A549 (cell line): ENCODE measurements at regions of chr1 and their contacts with region 1.

Region 1: GRCh38 chr1:155392898-155393411 is 72.3 kb downstream of the RUSC1 start:
- DNase-seq: no peak
- ATAC-seq: no peak
- H3K4me3 ChIP-seq: no peak overlapping the region
- H3K27ac ChIP-seq: no peak overlapping the region
- H3K4me1 ChIP-seq: no peaks in the 10 kb centered on the region
- CTCF ChIP-seq: no peak
- EP300 ChIP-seq: no peak
- POLR2A ChIP-seq: no peak
- RAD21 ChIP-seq: no peak

Region 2: GRCh38 chr1:155308493-155309422 is 84.2 kb before region 1 on chr1 and contains the start of gene FDPS:
- CTCF ChIA-PET with region 1: no interaction called
- POLR2A ChIA-PET with region 1: no interaction called
- DNase-seq: peak; percentile 98 to 99
- ATAC-seq: peak; percentile 98
- H3K4me3 ChIP-seq: peak within 1 kb of the TSS; percentile 97
- H3K27ac ChIP-seq: peak within 1 kb of the TSS; percentile 93 to 95
- H3K4me1 ChIP-seq: peaks cover 27% of the 10 kb centered on the region
- CTCF ChIP-seq: no peak
- EP300 ChIP-seq: no peak
- POLR2A ChIP-seq: peak; percentile 74
- RAD21 ChIP-seq: no peak
- polyA plus RNA-seq, gene FDPS: 143 and 148 TPM in 2 replicates

Region 3: GRCh38 chr1:155360051-155360450 is 32.9 kb before region 1 on chr1:
- CTCF ChIA-PET with region 1: no interaction called
- POLR2A ChIA-PET with region 1: no interaction called
- DNase-seq: no peak
- ATAC-seq: no peak
- H3K4me3 ChIP-seq: no peak overlapping the region
- H3K27ac ChIP-seq: no peak overlapping the region
- H3K4me1 ChIP-seq: no peaks in the 10 kb centered on the region
- CTCF ChIP-seq: no peak
- EP300 ChIP-seq: no peak
- POLR2A ChIP-seq: no peak
- RAD21 ChIP-seq: no peak

Region 4: DNA sequence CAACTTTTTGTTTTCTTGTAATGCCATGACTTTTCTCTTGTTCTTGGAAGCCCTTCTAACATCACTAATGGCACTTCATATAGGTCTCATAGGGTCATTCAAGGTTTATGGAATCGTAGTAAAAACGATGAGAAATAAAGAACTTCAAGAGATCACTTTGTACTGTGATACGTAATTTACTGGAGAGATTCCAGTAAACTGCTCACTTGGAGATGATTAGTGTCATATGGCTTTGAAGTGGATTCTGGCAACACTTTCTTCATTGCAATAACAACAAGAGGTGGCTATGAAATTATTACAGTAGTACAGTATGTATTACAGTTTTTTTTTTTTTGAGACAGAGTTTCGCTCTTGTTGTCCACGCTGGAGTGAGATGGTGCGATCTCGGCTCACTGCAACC is 31.1 kb after region 1 on chr1:
- CTCF ChIA-PET with region 1: no interaction called
- POLR2A ChIA-PET with region 1: interaction called, 17 read pairs
- DNase-seq: no peak
- ATAC-seq: no peak
- H3K4me3 ChIP-seq: no peak overlapping the region
- H3K27ac ChIP-seq: no peak overlapping the region
- H3K4me1 ChIP-seq: peaks cover 21% of the 10 kb centered on the region
- CTCF ChIP-seq: no peak
- EP300 ChIP-seq: no peak
- POLR2A ChIP-seq: no peak
- RAD21 ChIP-seq: no peak

Region 5: DNA sequence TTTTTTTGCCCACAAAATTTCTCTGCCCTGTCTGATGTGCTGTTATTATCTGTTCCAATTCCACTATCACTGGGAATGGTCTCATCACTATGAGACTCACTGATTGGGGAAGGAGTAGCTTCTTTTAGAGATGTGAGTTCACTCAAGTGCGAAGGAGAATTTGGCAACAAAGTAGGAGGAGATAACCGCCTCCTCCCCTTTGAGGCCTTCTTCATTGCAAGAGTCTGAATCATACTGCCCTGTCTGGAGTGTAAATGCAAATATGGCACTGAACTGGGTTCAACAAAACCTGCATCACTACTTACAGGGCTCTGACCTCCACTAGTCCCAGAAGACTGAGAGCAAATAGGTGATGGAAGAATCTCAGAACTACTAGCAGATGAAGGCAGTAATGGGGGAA is 86.2 kb after region 1 on chr1:
- CTCF ChIA-PET with region 1: no interaction called
- POLR2A ChIA-PET with region 1: no interaction called
- DNase-seq: peak in 1 of 2 experiments; percentile 48
- ATAC-seq: peak; percentile 54 to 80; a peak in 5 of 6 replicates
- H3K4me3 ChIP-seq: no peak overlapping the region
- H3K27ac ChIP-seq: peak overlapping the region in 1 of 2 experiments; percentile 17; a peak in 1 of 6 replicates
- H3K4me1 ChIP-seq: peaks cover 12% of the 10 kb centered on the region; the same call in 2 of the 3 replicates
- CTCF ChIP-seq: no peak
- EP300 ChIP-seq: no peak
- POLR2A ChIP-seq: no peak
- RAD21 ChIP-seq: no peak